CD4-positive, alpha-beta T cell (primary cell): ENCODE measurements at regions of chr17 and their contacts with region 1.

Region 1: DNA sequence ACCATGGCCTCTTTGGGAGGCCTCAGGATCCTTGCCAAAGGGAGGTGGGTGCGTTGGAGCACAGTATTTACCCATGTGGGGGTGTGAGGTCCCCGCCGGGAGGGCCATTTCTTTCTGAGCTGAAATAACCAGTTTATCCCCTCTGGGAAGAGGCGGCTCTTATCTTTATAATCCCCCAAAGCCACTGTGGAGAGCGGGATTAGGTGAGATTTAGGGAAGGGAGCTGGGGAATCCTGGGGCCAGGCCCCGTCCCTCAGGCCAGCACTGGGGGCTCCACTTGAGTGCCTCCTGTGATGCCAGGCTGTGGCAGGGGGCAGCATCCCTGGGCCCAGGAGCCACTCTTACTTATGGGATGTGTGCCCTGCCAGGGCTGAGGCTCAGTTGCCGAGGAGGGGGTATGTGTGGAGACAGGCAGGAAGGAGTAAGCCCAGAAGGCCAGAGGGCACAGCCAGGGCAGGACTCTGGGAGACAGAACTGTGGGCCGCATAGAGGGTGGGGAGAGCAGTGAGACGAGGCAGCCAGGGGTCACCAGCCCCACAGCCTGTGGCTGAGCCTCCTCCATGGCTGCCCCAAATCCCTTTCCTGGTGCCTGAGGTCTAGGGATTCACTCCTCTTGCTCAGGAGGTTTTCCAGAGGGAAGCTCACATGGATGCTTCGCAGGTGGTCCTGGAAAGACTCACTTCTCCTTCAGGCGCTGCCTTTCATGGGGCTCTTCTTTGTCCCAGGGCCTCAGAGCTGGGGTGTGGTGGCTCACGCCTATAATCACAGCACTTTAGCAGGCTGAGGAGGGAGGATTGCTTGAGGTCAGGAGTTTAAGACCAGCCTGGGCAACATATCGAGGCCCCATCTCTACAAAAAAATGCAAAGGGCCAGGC is 25.0 kb downstream of the TMEM94 start:
- DNase-seq: no peak
- ATAC-seq: no peak
- H3K4me3 ChIP-seq: no peak overlapping the region
- H3K4me3 Mint-ChIP-seq: no peak overlapping the region
- H3K27ac ChIP-seq: no peak overlapping the region
- H3K27ac Mint-ChIP-seq: no peak overlapping the region
- H3K4me1 ChIP-seq: peaks cover 7% of the 10 kb centered on the region
- H3K4me1 Mint-ChIP-seq: peaks cover 10% of the 10 kb centered on the region
- H3K27me3 ChIP-seq: no peaks in the 10 kb centered on the region
- H3K27me3 Mint-ChIP-seq: no peaks in the 10 kb centered on the region
- CTCF ChIP-seq: no peak

Region 2: GRCh38 chr17:75440738-75441448 is 40.5 kb before region 1 on chr17:
- CTCF ChIA-PET with region 1: no interaction called
- POLR2A ChIA-PET with region 1: interaction called, 3 read pairs
- intact Hi-C with region 1: loop called in 1 of 2 experiments (anchors 5 kb)
- DNase-seq: no peak
- ATAC-seq: no peak
- H3K4me3 ChIP-seq: no peak overlapping the region
- H3K4me3 Mint-ChIP-seq: no peak overlapping the region
- H3K27ac ChIP-seq: no peak overlapping the region
- H3K27ac Mint-ChIP-seq: no peak overlapping the region
- H3K4me1 ChIP-seq: peaks cover 8% of the 10 kb centered on the region
- H3K4me1 Mint-ChIP-seq: peaks cover 9% of the 10 kb centered on the region
- H3K27me3 ChIP-seq: no peaks in the 10 kb centered on the region
- H3K27me3 Mint-ChIP-seq: no peaks in the 10 kb centered on the region
- CTCF ChIP-seq: no peak